AG04450 (cell line): ENCODE measurements at regions of chr5 and their contacts with region 1.

Region 1: DNA sequence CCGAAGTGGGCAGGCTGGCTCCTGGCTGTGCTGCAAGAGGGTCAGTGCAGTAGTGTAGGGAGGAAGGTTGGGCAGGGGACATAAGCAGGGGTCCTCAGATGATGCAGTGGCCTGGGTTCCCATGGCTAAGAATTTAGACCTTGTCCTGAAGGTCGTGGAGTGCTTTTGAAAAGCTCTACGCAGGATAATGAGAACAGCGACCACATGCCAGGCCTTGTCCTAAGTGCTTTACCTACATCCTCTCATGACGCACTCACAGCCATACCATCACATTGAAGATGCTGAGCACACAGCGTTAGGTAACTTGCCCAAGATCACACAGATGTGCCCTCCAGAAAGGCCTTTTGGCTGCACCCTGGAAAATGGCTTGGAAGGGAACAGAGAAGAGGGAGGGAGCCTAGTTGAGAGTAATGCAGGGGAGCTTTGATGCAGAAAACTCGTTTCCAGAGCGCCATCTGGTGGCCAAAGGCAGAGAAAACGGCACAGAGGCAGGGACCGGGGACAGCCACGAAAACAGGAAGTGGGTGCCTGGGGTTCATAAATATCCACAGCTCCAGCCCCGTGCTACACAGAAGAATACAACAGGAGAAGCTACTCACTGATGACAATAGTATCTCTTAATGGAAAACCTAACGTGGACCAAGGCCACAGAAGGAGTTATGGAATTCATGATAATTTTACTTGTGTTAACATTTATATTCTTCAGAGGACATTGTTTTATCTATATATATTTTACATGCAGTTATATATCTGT is 2.6 kb upstream of the PCDH12 start:
- DNase-seq: peak; percentile 48
- H3K4me3 ChIP-seq: no peak overlapping the region
- H3K27ac ChIP-seq: no peak overlapping the region
- H3K27me3 ChIP-seq: no peaks in the 10 kb centered on the region
- CTCF ChIP-seq: peak; percentile 92

Region 2: GRCh38 chr5:141664732-141665461 is 295.7 kb before region 1 on chr5:
- CTCF ChIA-PET with region 1: interaction called, 27 read pairs
- POLR2A ChIA-PET with region 1: no interaction called
- DNase-seq: no peak
- H3K4me3 ChIP-seq: no peak overlapping the region
- H3K27ac ChIP-seq: no peak overlapping the region
- H3K27me3 ChIP-seq: no peaks in the 10 kb centered on the region
- CTCF ChIP-seq: peak; percentile 93

Region 3: DNA sequence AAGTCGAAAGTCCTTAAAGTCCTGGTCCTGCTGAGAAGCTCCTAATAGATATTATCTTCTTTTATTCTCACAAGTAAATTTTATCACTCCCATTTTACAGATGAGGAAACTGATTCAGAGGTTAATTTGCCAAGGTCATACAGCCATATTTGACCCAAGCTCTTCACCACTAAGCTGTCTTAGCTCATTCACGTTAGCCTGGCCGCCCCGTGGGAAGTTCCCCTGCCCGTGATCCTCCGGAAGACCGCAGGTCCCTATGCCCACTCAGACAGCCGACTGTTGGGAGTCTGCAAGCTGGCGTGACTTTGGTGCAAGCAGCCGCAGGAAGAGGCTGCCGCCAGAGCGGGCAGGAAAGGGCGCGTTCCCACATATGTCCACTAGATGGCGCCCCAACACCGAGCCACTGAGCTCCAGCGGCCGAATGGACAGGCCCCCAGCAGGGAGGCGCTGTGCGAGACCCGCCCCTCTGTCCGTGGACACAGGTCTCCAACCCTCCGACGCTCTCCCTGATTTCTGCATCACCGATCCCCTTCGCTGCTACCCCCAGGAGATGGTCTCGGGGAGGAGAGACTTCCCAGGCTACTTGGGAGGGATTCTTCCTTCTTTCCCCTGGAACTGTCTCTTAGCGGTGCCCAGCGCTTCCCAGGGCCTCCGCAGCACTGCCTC is 268.6 kb before region 1 on chr5:
- CTCF ChIA-PET with region 1: interaction called, 422 read pairs
- POLR2A ChIA-PET with region 1: interaction called, 7 read pairs
- DNase-seq: peak; percentile 38
- H3K4me3 ChIP-seq: peak overlapping the region; percentile 59
- H3K27ac ChIP-seq: no peak overlapping the region
- H3K27me3 ChIP-seq: peaks cover 38% of the 10 kb centered on the region
- CTCF ChIP-seq: peak; percentile 97

Region 4: DNA sequence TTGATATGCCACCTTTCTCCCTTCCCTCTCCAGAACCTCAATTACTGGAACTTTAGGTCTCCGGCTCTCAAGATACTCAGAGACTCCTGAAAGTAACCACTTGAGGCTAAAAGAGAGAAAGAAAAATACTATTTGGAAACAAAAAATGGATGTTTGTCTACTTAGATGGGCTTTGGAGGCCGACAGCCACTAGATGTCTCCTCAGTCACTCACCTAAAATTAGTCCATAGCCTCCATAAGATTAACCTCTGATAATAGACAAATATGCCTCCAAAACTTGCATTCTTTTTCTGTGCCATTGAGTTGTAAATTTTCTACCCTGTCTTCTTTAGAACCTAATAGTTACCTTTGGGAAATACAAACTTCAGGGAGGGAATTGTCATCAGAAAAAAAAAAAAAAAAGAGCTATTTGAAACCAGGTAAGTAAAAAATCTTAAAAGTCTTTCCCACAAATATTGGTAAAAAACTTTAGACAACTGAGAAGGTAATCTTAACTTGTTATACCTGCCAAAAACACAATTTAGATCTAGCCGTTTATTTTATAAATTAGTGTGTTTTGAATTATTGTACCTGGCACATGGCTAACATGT is 71.2 kb before region 1 on chr5:
- CTCF ChIA-PET with region 1: interaction called, 48 read pairs
- POLR2A ChIA-PET with region 1: no interaction called
- DNase-seq: no peak
- H3K4me3 ChIP-seq: no peak overlapping the region
- H3K27ac ChIP-seq: no peak overlapping the region
- H3K27me3 ChIP-seq: peaks cover 14% of the 10 kb centered on the region
- CTCF ChIP-seq: peak; percentile 46

Region 5: DNA sequence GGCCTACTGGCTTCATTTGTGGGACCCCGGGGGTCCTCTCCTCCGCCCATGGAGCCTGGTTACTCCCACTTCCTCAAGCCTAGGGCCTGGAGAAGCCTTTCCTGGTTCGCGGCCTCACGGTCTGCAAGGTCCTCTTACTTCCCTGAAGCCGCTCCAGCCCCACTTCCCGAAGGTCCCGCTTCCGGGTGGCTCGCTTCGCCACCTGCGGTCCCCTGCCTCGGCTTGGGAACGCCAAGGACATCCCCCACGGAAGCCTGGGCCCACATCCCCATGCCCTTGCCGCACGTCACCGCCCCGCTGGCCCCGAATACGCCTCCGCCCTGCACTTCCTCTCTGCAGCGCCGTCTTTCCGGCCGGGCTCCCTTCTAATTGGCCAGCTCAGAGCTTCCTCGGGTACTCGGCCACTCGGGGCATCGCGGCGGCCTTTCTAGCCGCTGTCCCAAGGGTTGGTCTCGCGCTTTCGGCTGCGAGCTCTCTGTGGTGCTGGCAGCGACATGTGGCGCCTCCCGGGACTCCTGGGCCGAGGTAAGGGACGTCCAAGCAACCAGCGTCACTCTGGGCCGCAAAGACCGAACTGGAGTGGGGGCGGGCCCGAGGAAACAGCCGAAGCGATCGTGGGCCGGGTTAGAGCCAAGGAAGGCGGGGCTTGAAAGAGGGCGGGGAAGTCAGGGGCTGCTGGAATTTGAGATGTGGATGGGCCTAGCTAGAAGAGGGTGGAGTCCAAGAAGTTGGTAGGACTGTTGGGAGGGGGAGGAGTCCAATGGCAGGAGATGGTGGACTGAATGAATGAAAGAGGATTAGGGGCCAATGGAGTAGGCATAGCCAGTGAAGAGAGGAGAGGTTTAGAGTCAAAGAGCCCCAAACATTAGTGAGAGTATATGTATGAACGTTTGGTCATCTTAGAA is 36.9 kb before region 1 on chr5 and contains the start of gene DELE1:
- CTCF ChIA-PET with region 1: interaction called, 11 read pairs
- POLR2A ChIA-PET with region 1: interaction called, 8 read pairs
- DNase-seq: peak; percentile 68
- H3K4me3 ChIP-seq: peak within 1 kb of the TSS; percentile 87
- H3K27ac ChIP-seq: peak within 1 kb of the TSS; percentile 99
- H3K27me3 ChIP-seq: no peaks in the 10 kb centered on the region
- CTCF ChIP-seq: no peak
- polyA plus RNA-seq, gene DELE1: 54.7 and 72.3 TPM in 2 replicates

Region 6: GRCh38 chr5:141940695-141941271 is 19.8 kb before region 1 on chr5:
- CTCF ChIA-PET with region 1: interaction called, 80 read pairs
- POLR2A ChIA-PET with region 1: interaction called, 3 read pairs
- DNase-seq: no peak
- H3K4me3 ChIP-seq: no peak overlapping the region
- H3K27ac ChIP-seq: no peak overlapping the region
- H3K27me3 ChIP-seq: no peaks in the 10 kb centered on the region
- CTCF ChIP-seq: peak; percentile 24; the same call in 1 of the 2 replicates

Region 7: DNA sequence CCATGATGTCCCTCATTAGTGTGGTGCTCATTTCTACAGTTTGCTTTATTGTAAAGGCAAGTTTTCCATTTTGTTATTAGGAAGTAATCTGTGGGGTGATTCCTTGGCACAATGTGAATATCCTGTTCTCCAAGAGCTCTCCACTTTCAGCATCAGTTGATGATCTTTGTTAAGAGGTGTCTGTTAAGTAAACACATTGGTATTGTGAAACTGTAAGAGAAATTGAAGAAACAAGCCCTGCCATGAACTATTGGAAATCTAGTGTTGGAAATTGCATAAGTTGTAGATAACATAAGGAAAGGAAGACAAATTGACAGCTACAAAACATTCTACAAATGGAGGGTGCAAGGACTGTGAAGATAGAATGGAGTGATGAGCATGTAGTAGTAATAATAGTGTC is 25.4 kb after region 1 on chr5:
- CTCF ChIA-PET with region 1: interaction called, 11 read pairs
- POLR2A ChIA-PET with region 1: no interaction called
- DNase-seq: no peak
- H3K4me3 ChIP-seq: no peak overlapping the region
- H3K27ac ChIP-seq: no peak overlapping the region
- H3K27me3 ChIP-seq: no peaks in the 10 kb centered on the region
- CTCF ChIP-seq: no peak

Region 8: GRCh38 chr5:142046191-142046590 is 85.6 kb after region 1 on chr5:
- CTCF ChIA-PET with region 1: no interaction called
- POLR2A ChIA-PET with region 1: no interaction called
- DNase-seq: no peak
- H3K4me3 ChIP-seq: no peak overlapping the region
- H3K27ac ChIP-seq: no peak overlapping the region
- H3K27me3 ChIP-seq: peaks cover 16% of the 10 kb centered on the region
- CTCF ChIP-seq: no peak